ENCODE measurements at regions of chr1 and their contacts with region 1.

Region 1: DNA sequence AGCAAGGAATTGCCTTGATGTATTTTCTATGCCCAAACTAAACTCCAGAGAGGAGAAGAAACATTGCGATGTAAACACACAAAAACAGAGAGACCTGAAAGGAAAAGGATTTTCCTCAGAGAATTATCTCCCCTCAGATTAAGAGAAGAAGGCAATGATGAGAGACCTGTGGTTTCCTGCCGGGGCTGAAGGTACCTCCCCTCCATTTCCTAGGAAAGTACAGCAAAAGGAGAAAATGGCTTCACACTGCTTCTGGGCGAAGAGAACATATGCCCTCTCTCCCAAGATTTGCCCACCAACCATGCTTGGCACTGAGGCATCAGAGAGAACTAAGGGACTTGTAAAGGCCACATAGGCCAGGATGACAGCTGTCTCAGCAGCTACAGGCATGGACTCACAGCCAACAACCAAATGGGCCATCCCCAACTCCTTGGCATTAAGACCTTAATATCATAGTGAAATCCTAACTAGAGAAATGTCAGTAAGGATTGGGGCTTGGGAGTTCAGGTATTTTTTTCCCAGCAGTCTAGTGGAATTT is 523.0 kb downstream of the PTPRC start:
- DNase-seq: no peak

Region 2: GRCh38 chr1:198234520-198235251 is 927.1 kb before region 1 on chr1:
- intact Hi-C with region 1: no loop called
- DNase-seq: no peak

Region 3: GRCh38 chr1:199113265-199113869 is 48.5 kb before region 1 on chr1:
- intact Hi-C with region 1: loop called in 1 of 2 experiments (anchors 2 kb)
- DNase-seq: no peak

Region 4: DNA sequence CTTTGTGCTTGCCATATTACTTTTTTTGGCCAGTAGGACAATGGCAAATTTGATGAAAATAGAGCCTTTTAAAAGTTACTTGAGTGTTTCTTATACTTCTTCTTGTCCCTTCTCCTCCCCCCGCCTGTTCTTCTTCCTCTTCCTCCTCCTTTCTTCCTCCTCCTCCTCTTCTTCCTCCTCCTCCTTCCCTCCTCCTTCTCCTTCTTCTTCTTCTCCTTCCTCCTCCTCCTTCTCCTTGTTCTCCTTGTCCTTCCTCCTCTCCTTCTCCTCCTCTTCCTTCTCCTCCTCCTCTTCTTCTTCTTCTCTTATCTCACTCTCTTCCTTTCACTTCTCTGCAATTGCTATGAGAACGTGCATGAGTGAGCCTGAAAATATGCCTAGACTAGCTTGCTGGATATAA is 399.5 kb after region 1 on chr1:
- intact Hi-C with region 1: no loop called
- DNase-seq: no peak